ENCODE measurements at regions of chr9 and their contacts with region 1.

Region 1: DNA sequence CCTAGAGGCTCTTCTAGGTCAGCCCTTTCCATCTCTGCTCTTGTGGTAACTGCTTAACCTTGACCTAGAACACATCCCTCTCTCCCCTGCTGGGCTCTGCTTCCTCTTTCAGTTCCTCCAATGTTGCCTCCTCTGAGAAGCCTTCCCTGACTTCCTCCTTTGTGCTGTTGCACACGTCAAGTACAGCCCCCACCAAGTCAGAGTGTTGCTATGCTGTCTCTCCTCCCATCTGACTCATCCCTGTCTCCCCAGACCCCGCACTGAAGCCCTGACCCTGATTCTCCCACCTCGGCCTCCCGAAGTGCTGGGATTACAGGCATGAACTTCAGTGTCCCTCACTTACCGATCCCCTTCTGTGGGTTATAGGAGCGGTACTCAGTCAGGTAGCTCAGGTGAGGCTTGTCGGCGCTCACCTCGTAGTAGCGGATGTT is 10.4 kb upstream of the TRIM14 start:
- DNase-seq: peak; percentile 81
- ATAC-seq: peak; percentile 91
- H3K4me3 ChIP-seq: no peak overlapping the region
- H3K4me3 Mint-ChIP-seq: peak overlapping the region; percentile 43
- H3K27ac ChIP-seq: peak overlapping the region; percentile 8 to 42
- H3K27ac Mint-ChIP-seq: peak overlapping the region; percentile 80
- H3K4me1 ChIP-seq: peaks cover 20 to 36% of the 10 kb centered on the region in 2 donors
- H3K4me1 Mint-ChIP-seq: peaks cover 33% of the 10 kb centered on the region
- H3K27me3 ChIP-seq: no peaks in the 10 kb centered on the region
- H3K27me3 Mint-ChIP-seq: no peaks in the 10 kb centered on the region
- CTCF ChIP-seq: no peak

Region 2: GRCh38 chr9:98108531-98109031 is 20.9 kb before region 1 on chr9:
- CTCF ChIA-PET with region 1: interaction called, 5 read pairs
- POLR2A ChIA-PET with region 1: interaction called, 6 read pairs
- intact Hi-C with region 1: loop called (anchors 2 kb)
- DNase-seq: peak; percentile 93
- ATAC-seq: peak; percentile 83
- H3K4me3 ChIP-seq: peak overlapping the region in 1 of 5 experiments; percentile 18
- H3K4me3 Mint-ChIP-seq: peak overlapping the region; percentile 88
- H3K27ac ChIP-seq: peak overlapping the region; percentile 87 to 91
- H3K27ac Mint-ChIP-seq: peak overlapping the region; percentile 100
- H3K4me1 ChIP-seq: peaks cover 58 to 64% of the 10 kb centered on the region in 2 donors
- H3K4me1 Mint-ChIP-seq: peaks cover 60% of the 10 kb centered on the region
- H3K27me3 ChIP-seq: no peaks in the 10 kb centered on the region
- H3K27me3 Mint-ChIP-seq: no peaks in the 10 kb centered on the region
- CTCF ChIP-seq: no peak

Measured in B cell (primary cell).